Prostate gland (tissue), 2 donors: ENCODE measurements at regions of chr9 and their contacts with region 1.

Region 1: DNA sequence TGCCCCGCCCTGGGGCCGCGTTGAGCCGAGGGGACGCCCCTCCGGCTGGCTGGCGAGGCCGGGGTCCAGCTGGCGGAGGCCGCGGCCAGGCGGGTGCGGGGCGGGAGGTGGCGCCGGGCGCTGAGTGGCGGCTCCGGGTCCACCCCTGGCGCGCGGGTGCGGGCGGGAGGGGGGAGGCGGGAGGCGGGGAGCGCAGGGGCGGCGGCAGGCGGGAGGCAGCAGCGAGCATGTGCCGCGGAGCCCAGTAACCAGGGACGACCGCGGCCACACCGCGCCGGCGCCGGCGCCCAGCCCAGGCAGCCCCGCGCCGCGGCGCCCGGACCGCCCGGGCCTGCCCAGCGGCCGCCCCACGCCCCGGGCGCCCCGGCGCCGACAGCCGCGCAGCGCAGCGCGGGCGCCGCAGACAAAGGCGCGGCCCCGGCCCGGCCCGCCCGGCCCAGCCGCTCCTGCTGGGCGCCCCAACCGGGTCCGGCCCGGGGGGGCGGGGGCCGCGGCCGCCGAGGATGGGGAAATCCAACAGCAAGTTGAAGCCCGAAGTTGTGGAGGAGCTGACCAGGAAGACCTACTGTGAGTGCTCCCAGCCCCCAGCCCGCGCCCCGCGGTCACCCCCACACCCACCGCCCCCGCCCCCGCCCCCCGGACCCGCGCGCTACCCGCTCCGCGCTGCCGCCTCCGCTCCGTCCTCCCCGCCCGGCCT is at the start of gene NCS1:
- DNase-seq: peak; percentile 77
- H3K4me3 ChIP-seq: peak within 1 kb of the TSS; percentile 57 to 63
- H3K27ac ChIP-seq: peak within 1 kb of the TSS; percentile 79
- H3K4me1 ChIP-seq: no peaks in the 10 kb centered on the region
- H3K27me3 ChIP-seq: no peaks in the 10 kb centered on the region
- CTCF ChIP-seq: no peak
- POLR2A ChIP-seq: no peak
- total RNA-seq, gene NCS1: 19.1 to 28.5 TPM

Region 2: DNA sequence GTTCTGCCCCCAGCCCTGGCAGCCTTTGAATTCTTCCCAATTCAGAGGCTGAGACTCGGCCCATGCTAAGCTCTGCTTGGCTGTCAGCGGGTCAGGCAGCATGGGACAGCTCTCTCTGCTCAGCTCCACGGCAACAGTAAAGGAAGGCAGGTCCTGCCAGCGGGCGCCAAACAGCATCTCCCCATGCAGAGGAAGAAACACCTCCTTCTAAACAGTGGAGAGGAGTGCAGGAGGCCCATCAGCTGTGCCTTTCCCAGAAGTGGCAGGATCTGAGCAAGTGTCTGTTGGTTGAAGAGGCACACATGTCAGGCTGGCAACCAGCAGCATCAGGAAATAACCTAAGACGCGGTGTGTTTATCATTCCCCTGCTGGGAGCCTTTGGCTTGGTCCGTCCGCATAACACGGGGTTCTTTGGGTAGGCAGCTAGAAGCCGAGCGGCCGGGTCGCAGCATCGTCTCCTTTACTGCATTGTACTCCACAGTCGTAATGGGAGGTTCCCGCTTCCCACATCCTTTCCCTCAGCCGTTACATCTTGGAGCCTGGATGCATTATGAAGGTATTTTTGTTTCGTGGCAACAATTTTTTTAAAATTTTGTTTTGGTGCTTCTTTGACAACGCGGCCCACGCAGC is 42.8 kb before region 1 on chr9:
- intact Hi-C with region 1: loop called (anchors 5 kb)
- DNase-seq: no peak
- H3K4me3 ChIP-seq: no peak overlapping the region
- H3K27ac ChIP-seq: peak overlapping the region; percentile 61 to 71
- H3K4me1 ChIP-seq: no peaks in the 10 kb centered on the region
- H3K27me3 ChIP-seq: no peaks in the 10 kb centered on the region
- CTCF ChIP-seq: no peak
- POLR2A ChIP-seq: no peak

Region 3: GRCh38 chr9:130220352-130220751 is 48.0 kb after region 1 on chr9:
- intact Hi-C with region 1: no loop called
- DNase-seq: no peak
- H3K4me3 ChIP-seq: no peak overlapping the region
- H3K27ac ChIP-seq: peak overlapping the region in 1 of 2 donors; percentile 23
- H3K4me1 ChIP-seq: no peaks in the 10 kb centered on the region
- H3K27me3 ChIP-seq: no peaks in the 10 kb centered on the region
- CTCF ChIP-seq: no peak
- POLR2A ChIP-seq: no peak

Region 4: GRCh38 chr9:130265431-130266235 is 93.3 kb after region 1 on chr9 and contains the start of gene HMCN2:
- intact Hi-C with region 1: no loop called
- DNase-seq: no peak
- H3K4me3 ChIP-seq: peak within 1 kb of the TSS; percentile 14 to 18
- H3K27ac ChIP-seq: peak within 1 kb of the TSS in 1 of 2 donors; percentile 30
- H3K4me1 ChIP-seq: peaks cover 10% of the 10 kb centered on the region
- H3K27me3 ChIP-seq: peaks cover 17% of the 10 kb centered on the region
- CTCF ChIP-seq: no peak
- POLR2A ChIP-seq: no peak
- total RNA-seq, gene HMCN2: 2.9 to 5.5 TPM